Activated CD8-positive, alpha-beta T cell treated with anti-CD3 and anti-CD28 coated beads, Interleukin-2, amount 10 ng/mL, durations not matched to agents 7 days and 5 days (primary cell): ENCODE measurements at regions of chr12 and their contacts with region 1.

Region 1: GRCh38 chr12:29088611-29089219 is 60.4 kb upstream of the FAR2 start:
- DNase-seq: no peak
- ATAC-seq: no peak
- H3K4me3 Mint-ChIP-seq: no peak overlapping the region
- H3K27ac Mint-ChIP-seq: no peak overlapping the region
- H3K4me1 Mint-ChIP-seq: peaks cover 1% of the 10 kb centered on the region
- H3K27me3 Mint-ChIP-seq: peaks cover 4% of the 10 kb centered on the region

Region 2: GRCh38 chr12:28966046-28966780 is 122.5 kb before region 1 on chr12:
- CTCF ChIA-PET with region 1: no interaction called
- POLR2A ChIA-PET with region 1: no interaction called
- DNase-seq: no peak
- ATAC-seq: no peak
- H3K4me3 Mint-ChIP-seq: no peak overlapping the region
- H3K27ac Mint-ChIP-seq: no peak overlapping the region
- H3K4me1 Mint-ChIP-seq: no peaks in the 10 kb centered on the region
- H3K27me3 Mint-ChIP-seq: no peaks in the 10 kb centered on the region

Region 3: DNA sequence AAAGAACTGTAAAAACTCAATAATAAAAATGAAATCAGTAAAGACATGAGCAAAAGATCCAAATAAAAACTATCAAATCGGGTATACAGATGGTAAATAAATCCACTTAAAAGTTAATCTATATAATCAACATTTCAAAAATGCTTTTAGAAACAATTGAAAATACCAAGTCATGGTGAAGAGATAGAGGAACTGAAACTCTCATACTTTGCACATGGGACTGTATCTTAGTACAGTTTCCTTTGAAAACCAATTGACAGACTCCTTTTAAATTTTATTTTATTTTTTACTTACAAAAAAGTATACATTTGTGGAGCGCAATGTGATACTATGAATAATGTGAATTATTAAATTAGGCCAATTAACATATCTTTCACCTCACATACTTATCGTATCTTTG is 38.2 kb before region 1 on chr12:
- CTCF ChIA-PET with region 1: no interaction called
- POLR2A ChIA-PET with region 1: no interaction called
- DNase-seq: no peak
- ATAC-seq: no peak
- H3K4me3 Mint-ChIP-seq: no peak overlapping the region
- H3K27ac Mint-ChIP-seq: no peak overlapping the region
- H3K4me1 Mint-ChIP-seq: no peaks in the 10 kb centered on the region
- H3K27me3 Mint-ChIP-seq: peaks cover 10% of the 10 kb centered on the region

Region 4: GRCh38 chr12:29073628-29074239 is 15.0 kb before region 1 on chr12:
- CTCF ChIA-PET with region 1: interaction called, 28 read pairs
- POLR2A ChIA-PET with region 1: no interaction called
- DNase-seq: peak; percentile 31
- ATAC-seq: peak; percentile 55
- H3K4me3 Mint-ChIP-seq: no peak overlapping the region
- H3K27ac Mint-ChIP-seq: no peak overlapping the region
- H3K4me1 Mint-ChIP-seq: no peaks in the 10 kb centered on the region
- H3K27me3 Mint-ChIP-seq: peaks cover 20% of the 10 kb centered on the region

Region 5: DNA sequence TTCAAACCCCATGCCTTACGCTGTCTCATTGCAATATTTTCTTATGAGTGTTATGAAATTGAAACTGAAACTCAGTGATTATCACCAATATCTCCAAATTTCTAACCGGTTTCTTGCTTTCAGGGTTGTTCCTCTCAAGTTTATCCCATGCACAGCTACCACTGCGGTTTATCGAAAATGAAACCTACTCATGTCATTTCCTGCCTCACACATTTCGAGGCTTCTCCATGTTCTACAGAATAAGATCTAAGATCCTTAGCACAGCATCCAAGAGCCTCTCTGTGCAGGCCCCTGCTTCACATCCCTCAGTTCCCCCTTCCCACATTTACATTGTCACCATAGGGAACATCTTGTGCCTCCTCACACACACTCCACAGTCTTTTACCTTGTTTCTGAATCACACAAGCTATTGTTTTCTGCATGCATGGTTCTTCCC is 14.8 kb after region 1 on chr12:
- CTCF ChIA-PET with region 1: interaction called, 13 read pairs
- POLR2A ChIA-PET with region 1: no interaction called
- DNase-seq: peak; percentile 81
- ATAC-seq: peak; percentile 92
- H3K4me3 Mint-ChIP-seq: peak overlapping the region; percentile 48
- H3K27ac Mint-ChIP-seq: peak overlapping the region; percentile 95
- H3K4me1 Mint-ChIP-seq: peaks cover 36% of the 10 kb centered on the region
- H3K27me3 Mint-ChIP-seq: no peaks in the 10 kb centered on the region

Region 6: GRCh38 chr12:29317556-29318363 is 229.0 kb after region 1 on chr12:
- CTCF ChIA-PET with region 1: interaction called, 82 read pairs
- POLR2A ChIA-PET with region 1: interaction called, 3 read pairs
- DNase-seq: peak; percentile 69
- ATAC-seq: peak; percentile 100
- H3K4me3 Mint-ChIP-seq: no peak overlapping the region
- H3K27ac Mint-ChIP-seq: no peak overlapping the region
- H3K4me1 Mint-ChIP-seq: peaks cover 12% of the 10 kb centered on the region
- H3K27me3 Mint-ChIP-seq: no peaks in the 10 kb centered on the region

Region 7: GRCh38 chr12:29463198-29463597 is 374.5 kb after region 1 on chr12:
- CTCF ChIA-PET with region 1: no interaction called
- POLR2A ChIA-PET with region 1: no interaction called
- DNase-seq: no peak
- ATAC-seq: no peak
- H3K4me3 Mint-ChIP-seq: no peak overlapping the region
- H3K27ac Mint-ChIP-seq: no peak overlapping the region
- H3K4me1 Mint-ChIP-seq: no peaks in the 10 kb centered on the region
- H3K27me3 Mint-ChIP-seq: no peaks in the 10 kb centered on the region